ENCODE measurements at regions of chr17 and their contacts with region 1.

Region 1: GRCh38 chr17:42120770-42121769 is at the start of gene KAT2A:
- DNase-seq: no peak
- ATAC-seq: peak; percentile 94
- H3K4me3 ChIP-seq: peak within 1 kb of the TSS; percentile 82
- H3K27ac ChIP-seq: no peak within 1 kb of the TSS
- H3K4me1 ChIP-seq: peaks cover 5% of the 10 kb centered on the region
- H3K27me3 ChIP-seq: no peaks in the 10 kb centered on the region
- CTCF ChIP-seq: no peak
- EP300 ChIP-seq: no peak
- POLR2A ChIP-seq: peak; percentile 91
- RAD21 ChIP-seq: no peak
- polyA plus RNA-seq, gene KAT2A: 0.85 to 3.0 TPM

Region 2: GRCh38 chr17:42153919-42154742 is 33.1 kb after region 1 on chr17:
- CTCF ChIA-PET with region 1: interaction called, 11 read pairs
- POLR2A ChIA-PET with region 1: interaction called, 6 read pairs
- RAD21 ChIA-PET with region 1: interaction called, 3 read pairs
- SMC1A ChIA-PET with region 1: no interaction called
- in situ Hi-C with region 1: no loop called
- intact Hi-C with region 1: no loop called
- DNase-seq: no peak
- ATAC-seq: peak; percentile 9
- H3K4me3 ChIP-seq: peak overlapping the region; percentile 91
- H3K27ac ChIP-seq: peak overlapping the region; percentile 84
- H3K4me1 ChIP-seq: peaks cover 5% of the 10 kb centered on the region
- H3K27me3 ChIP-seq: no peaks in the 10 kb centered on the region
- CTCF ChIP-seq: no peak
- EP300 ChIP-seq: no peak
- POLR2A ChIP-seq: 0 out of 2 replicates have a peak, but pooled peaks have one; percentile 13
- RAD21 ChIP-seq: no peak